Activated CD8-positive, alpha-beta T cell treated with anti-CD3 and anti-CD28 coated beads, Interleukin-2, amount 10 ng/mL, durations not matched to agents 7 days and 5 days (primary cell): ENCODE measurements at regions of chr12 and their contacts with region 1.

Region 1: DNA sequence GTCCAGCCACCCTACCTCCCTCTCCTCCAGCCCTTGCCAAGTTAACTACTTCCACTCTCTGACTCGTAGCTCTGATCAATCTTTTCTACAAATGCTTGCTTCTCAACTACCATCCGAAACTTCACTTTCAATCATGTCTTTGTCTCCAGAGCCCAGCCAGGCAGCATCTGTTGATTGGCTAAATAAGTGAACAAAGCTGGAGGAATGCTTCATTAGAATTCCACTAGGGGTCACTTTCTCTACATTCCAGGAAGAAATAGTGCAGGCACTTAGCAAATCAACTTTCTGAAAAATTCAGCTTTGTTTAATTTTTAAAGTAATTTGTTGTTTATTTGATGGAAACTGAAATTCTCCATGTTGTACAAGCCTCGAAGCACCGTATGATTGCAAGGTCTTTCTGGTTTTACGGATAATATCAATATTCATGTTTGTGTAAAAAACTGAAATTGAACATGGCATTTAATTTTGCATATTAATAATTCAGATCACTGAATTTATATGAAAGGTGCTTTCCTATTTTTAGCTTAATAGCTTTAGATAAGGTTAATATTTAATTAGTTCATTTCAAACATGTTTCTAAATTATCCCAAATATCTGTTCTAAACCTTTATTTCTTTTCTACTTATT is 32.4 kb upstream of the HELB start:
- DNase-seq: peak; percentile 33
- ATAC-seq: peak; percentile 72
- H3K4me3 Mint-ChIP-seq: no peak overlapping the region
- H3K27ac Mint-ChIP-seq: no peak overlapping the region
- H3K4me1 Mint-ChIP-seq: peaks cover 1% of the 10 kb centered on the region
- H3K27me3 Mint-ChIP-seq: peaks cover 2% of the 10 kb centered on the region

Region 2: GRCh38 chr12:65952737-65953209 is 317.1 kb before region 1 on chr12:
- CTCF ChIA-PET with region 1: no interaction called
- POLR2A ChIA-PET with region 1: no interaction called
- DNase-seq: no peak
- ATAC-seq: no peak
- H3K4me3 Mint-ChIP-seq: no peak overlapping the region
- H3K27ac Mint-ChIP-seq: no peak overlapping the region
- H3K4me1 Mint-ChIP-seq: no peaks in the 10 kb centered on the region
- H3K27me3 Mint-ChIP-seq: peaks cover 5% of the 10 kb centered on the region

Region 3: GRCh38 chr12:66144791-66145754 is 124.8 kb before region 1 on chr12:
- CTCF ChIA-PET with region 1: interaction called, 21 read pairs
- POLR2A ChIA-PET with region 1: no interaction called
- DNase-seq: peak; percentile 28
- ATAC-seq: peak; percentile 49
- H3K4me3 Mint-ChIP-seq: no peak overlapping the region
- H3K27ac Mint-ChIP-seq: peak overlapping the region; percentile 78
- H3K4me1 Mint-ChIP-seq: peaks cover 17% of the 10 kb centered on the region
- H3K27me3 Mint-ChIP-seq: no peaks in the 10 kb centered on the region

Region 4: GRCh38 chr12:66196806-66197205 is 73.1 kb before region 1 on chr12:
- CTCF ChIA-PET with region 1: no interaction called
- POLR2A ChIA-PET with region 1: no interaction called
- DNase-seq: no peak
- ATAC-seq: no peak
- H3K4me3 Mint-ChIP-seq: no peak overlapping the region
- H3K27ac Mint-ChIP-seq: no peak overlapping the region
- H3K4me1 Mint-ChIP-seq: peaks cover 4% of the 10 kb centered on the region
- H3K27me3 Mint-ChIP-seq: peaks cover 11% of the 10 kb centered on the region

Region 5: GRCh38 chr12:66288121-66288520 is 18.3 kb after region 1 on chr12:
- CTCF ChIA-PET with region 1: interaction called, 14 read pairs
- POLR2A ChIA-PET with region 1: interaction called, 3 read pairs
- DNase-seq: peak; percentile 76
- ATAC-seq: peak; percentile 96
- H3K4me3 Mint-ChIP-seq: peak overlapping the region; percentile 54
- H3K27ac Mint-ChIP-seq: peak overlapping the region; percentile 77
- H3K4me1 Mint-ChIP-seq: peaks cover 62% of the 10 kb centered on the region
- H3K27me3 Mint-ChIP-seq: no peaks in the 10 kb centered on the region

Region 6: GRCh38 chr12:66393890-66394289 is 124.0 kb after region 1 on chr12:
- CTCF ChIA-PET with region 1: interaction called, 11 read pairs
- POLR2A ChIA-PET with region 1: no interaction called
- DNase-seq: peak; percentile 26
- ATAC-seq: peak; percentile 85
- H3K4me3 Mint-ChIP-seq: peak overlapping the region; percentile 22
- H3K27ac Mint-ChIP-seq: peak overlapping the region; percentile 44
- H3K4me1 Mint-ChIP-seq: peaks cover 22% of the 10 kb centered on the region
- H3K27me3 Mint-ChIP-seq: peaks cover 29% of the 10 kb centered on the region

Region 7: DNA sequence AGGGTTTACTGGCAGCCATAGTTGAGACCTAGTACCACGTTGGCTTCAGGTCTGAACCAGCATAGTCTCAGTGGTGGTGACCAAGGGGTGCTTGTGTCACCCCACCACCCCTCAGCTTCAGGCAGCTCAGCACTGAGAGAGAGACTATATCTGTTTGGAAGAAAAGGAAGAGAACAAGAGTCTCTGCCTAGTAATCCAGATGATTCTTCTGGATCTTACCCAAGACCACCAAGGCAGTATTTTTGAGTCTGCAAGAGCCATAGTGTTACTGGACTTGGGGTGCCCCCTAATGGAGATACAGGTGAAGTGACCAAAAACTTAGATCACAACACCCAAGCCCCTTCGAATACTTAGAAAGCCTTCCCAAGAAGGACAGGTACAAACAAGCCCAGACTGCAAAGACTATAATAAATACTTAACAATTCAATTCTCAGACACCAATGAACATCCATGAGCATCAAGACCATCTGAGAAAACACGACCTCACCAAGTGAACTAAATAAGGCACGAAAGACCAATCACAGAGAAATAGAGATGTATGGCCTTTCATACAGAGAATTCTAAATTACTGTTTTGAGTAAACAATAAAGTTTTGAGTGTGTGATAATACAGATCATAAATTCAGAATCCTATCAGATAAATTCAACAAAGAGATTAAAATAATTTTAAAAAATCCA is 139.5 kb after region 1 on chr12:
- CTCF ChIA-PET with region 1: interaction called, 37 read pairs
- POLR2A ChIA-PET with region 1: no interaction called
- DNase-seq: peak; percentile 63
- ATAC-seq: peak; percentile 42
- H3K4me3 Mint-ChIP-seq: no peak overlapping the region
- H3K27ac Mint-ChIP-seq: no peak overlapping the region
- H3K4me1 Mint-ChIP-seq: no peaks in the 10 kb centered on the region
- H3K27me3 Mint-ChIP-seq: peaks cover 8% of the 10 kb centered on the region

Region 8: DNA sequence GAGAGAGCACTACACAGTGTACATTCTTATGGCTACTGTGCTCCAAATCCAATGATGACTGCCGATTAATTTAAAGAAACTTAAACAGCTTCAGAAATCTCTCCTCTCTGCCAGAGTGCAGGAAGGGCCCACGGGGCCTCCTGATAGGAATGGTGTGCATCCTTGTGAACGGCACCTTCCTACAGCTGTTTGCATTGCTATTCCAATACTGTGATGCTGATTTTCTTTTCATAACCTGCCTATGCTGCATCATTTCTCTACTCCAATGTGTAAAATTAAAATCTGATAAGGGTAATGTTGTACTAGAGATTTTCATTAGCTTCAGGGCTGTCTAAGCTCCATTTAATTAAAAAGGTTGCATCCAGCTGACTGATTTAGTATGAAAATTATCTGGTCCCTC is 191.5 kb after region 1 on chr12:
- CTCF ChIA-PET with region 1: no interaction called
- POLR2A ChIA-PET with region 1: no interaction called
- DNase-seq: no peak
- ATAC-seq: no peak
- H3K4me3 Mint-ChIP-seq: no peak overlapping the region
- H3K27ac Mint-ChIP-seq: no peak overlapping the region
- H3K4me1 Mint-ChIP-seq: no peaks in the 10 kb centered on the region
- H3K27me3 Mint-ChIP-seq: no peaks in the 10 kb centered on the region

Region 9: GRCh38 chr12:66500841-66501240 is 231.0 kb after region 1 on chr12:
- CTCF ChIA-PET with region 1: no interaction called
- POLR2A ChIA-PET with region 1: no interaction called
- DNase-seq: no peak
- ATAC-seq: no peak
- H3K4me3 Mint-ChIP-seq: no peak overlapping the region
- H3K27ac Mint-ChIP-seq: no peak overlapping the region
- H3K4me1 Mint-ChIP-seq: peaks cover 3% of the 10 kb centered on the region
- H3K27me3 Mint-ChIP-seq: peaks cover 8% of the 10 kb centered on the region

Region 10: DNA sequence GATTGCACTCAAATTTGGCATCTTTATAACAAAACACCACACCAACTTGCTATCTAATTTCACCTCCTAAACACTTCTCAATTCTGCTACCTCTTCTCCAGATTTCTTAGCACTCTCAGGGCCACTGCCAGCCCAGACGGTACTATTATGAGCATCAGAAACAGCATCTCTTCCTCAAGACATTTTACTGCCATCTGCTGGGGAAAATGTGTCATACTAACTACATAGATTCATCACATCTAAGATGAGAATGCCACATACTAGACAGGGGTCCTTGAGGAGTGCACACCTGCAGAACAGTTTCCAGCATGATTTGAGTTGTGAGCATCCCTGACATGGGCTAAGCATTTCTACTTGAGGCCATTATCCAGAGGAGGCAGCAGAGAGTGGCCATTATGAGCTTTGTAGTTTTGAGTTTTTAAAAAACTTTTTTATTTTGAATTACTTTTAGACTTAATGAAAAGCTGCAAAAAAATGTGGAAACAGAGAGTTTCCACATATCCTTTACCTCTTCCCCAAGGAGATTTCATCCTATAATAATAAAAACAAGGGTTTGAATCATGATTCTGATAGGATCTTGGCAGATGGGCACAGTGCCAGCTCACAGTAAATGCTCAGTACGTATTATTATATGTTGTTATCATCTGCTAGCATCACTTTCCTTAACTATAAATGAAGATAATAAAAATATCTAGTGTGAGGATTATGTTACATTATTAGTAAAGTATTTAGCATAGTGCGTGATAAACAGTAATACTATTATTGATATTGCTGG is 424.2 kb after region 1 on chr12:
- CTCF ChIA-PET with region 1: interaction called, 10 read pairs
- POLR2A ChIA-PET with region 1: no interaction called
- DNase-seq: peak; percentile 56
- ATAC-seq: peak; percentile 88
- H3K4me3 Mint-ChIP-seq: no peak overlapping the region
- H3K27ac Mint-ChIP-seq: no peak overlapping the region
- H3K4me1 Mint-ChIP-seq: peaks cover 18% of the 10 kb centered on the region
- H3K27me3 Mint-ChIP-seq: peaks cover 9% of the 10 kb centered on the region